Left cardiac atrium (tissue), 4 donors: ENCODE measurements at regions of chr11 and their contacts with region 1.

Region 1: DNA sequence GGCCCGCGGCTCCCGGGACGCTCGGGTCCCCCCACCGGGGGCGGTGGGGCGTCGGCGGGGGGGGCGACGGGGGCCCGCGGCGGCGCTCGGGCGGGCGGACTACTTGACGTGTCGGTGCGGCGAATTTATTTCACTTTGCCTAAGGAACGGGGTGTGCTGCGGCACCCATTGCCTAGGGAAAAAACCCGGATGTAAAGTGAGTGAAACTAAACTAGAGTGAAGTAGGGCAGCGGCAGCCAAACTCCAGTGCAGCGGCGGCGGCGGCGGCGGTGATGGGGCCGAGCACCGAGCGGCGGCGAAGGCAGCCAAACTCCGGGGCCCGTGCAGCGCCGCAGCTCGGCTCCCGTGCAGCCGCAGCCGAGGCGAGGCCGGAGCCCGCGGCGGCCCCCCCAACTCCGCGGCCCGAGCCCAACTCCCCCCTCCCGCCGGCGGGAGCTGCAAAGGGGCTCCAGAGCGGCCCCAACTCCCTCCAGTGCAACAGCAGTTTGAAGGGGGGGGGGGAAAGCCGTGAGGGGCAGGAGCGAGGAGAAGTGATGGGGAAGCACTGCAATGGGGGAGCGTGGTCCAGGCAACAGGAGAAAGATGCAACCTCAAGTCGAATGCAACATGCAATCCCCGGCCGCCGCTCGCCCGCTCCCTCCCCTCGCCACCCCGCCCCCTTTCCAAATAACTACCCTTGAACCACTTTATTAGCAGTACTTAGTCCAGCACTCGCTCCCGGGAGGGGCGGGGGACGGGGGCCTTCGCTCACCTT is 647 bp upstream of the PHF21A start:
- DNase-seq: peak; percentile 84
- ATAC-seq: peak; percentile 27 to 53

Region 2: GRCh38 chr11:46050003-46050461 is 71.9 kb before region 1 on chr11:
- intact Hi-C with region 1: loop called in 1 of 2 experiments (anchors 10 kb)
- DNase-seq: peak; percentile 31
- ATAC-seq: peak; percentile 71 to 92

Region 3: DNA sequence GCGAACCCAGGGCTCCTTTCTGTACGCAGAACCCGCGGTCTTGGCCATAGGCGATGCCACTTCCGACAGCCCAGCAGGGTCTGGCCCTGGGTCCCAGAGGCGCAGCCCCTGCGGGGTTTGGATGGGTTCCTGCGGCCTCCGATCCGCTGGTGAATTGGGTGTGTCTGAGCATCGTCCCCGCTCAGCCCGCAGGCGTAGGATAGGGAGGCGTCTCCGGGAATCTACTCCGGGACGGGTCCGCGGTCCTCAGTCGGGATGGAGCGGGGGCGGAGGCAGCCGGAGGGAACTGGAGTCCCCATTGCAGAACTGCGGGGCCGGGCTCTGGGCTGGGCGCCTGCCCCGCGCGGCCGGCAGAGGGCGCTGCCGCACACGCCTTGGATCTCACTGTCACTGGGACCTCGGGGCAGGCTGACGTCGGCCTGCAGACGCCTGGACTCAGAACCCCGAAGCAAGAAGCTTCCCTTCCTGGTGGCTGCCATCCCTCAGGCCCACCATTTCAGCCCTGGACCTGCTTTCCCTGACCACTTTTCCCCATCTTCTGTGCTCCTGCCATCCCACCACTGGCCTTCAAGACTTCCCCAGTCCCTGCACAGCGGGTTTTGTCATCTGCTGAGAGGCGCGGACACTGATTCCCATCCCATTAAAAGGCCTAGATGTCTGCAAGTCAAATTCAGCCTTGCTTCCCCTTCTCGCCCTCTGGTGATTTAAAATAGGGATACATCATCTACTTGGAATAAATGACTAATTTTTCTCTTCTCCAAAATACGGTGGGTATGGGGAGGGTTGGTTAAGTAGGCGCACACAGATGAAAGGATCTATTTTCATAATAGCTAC is 117.3 kb after region 1 on chr11:
- intact Hi-C with region 1: loop called in 1 of 2 experiments (anchors 5 kb)
- DNase-seq: peak; percentile 89
- ATAC-seq: peak; percentile 84 to 86

Region 4: DNA sequence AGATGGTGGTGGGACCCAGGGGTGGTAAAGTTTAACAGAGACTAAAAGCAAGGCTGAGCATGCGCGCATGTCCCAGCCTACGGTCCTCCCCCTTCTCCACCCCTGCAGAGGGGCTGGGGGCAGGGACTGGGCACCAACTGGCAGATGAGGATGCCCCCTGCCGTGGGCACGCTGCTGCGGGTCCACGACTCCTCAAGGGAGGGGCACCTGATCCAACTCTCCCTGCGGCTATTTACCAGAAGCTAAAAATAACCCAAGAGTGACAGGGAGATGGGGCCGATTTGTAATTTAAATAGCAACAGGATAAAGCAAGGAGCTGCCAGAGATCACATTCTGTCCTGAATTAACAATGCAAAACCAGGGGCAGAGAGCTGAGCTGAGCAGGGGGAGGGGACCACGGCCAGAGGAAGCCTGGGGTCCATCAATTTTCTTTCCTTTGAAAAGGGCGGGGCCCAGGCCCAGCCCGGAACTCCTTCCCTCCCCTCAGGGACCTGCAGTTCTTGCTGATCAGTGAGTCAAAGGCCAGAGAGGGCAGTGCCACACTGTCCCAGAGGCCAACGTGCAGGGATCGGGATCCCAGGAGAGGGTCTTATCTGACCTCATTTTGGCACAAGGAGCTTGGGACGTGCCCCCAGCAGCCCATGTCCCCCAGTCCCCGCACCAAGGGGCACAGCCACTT is 217.2 kb after region 1 on chr11:
- intact Hi-C with region 1: loop called in 1 of 2 experiments (anchors 10 kb)
- DNase-seq: peak; percentile 65
- ATAC-seq: peak; percentile 79 to 84